BJ (cell line): ENCODE measurements at regions of chr4 and their contacts with region 1.

Region 1: DNA sequence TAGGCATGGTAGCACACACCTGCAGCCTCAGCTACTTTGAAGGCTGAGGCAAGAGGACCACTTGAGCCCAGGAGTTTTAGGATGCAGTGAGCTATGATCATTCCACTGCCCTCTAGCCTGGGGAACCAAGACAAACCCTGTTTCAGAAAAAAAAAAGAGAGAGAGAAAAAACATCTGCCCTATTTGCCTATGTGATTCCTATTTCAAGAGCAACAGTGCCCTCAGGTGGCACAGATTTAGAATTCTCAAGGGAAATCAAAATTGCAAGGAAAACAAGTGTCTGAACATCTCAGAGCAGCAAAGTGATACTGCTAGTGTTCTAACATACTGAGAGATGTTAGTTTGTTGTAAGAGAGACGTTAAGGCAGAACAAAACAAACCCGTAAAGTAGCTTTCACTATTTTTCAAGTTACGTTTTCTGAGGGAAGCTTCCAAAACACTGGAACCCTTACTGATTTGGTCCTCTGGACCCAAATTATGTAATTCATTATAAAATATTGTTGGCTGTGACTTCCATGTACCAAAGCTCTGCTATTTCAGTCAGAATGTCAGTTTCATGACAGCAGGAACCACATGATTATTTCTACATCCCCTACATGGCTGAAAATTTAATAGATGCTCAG is 7.9 kb downstream of the BDH2 start:
- DNase-seq: no peak
- H3K4me3 ChIP-seq: no peak overlapping the region
- H3K27me3 ChIP-seq: no peaks in the 10 kb centered on the region
- CTCF ChIP-seq: peak; percentile 60

Region 2: DNA sequence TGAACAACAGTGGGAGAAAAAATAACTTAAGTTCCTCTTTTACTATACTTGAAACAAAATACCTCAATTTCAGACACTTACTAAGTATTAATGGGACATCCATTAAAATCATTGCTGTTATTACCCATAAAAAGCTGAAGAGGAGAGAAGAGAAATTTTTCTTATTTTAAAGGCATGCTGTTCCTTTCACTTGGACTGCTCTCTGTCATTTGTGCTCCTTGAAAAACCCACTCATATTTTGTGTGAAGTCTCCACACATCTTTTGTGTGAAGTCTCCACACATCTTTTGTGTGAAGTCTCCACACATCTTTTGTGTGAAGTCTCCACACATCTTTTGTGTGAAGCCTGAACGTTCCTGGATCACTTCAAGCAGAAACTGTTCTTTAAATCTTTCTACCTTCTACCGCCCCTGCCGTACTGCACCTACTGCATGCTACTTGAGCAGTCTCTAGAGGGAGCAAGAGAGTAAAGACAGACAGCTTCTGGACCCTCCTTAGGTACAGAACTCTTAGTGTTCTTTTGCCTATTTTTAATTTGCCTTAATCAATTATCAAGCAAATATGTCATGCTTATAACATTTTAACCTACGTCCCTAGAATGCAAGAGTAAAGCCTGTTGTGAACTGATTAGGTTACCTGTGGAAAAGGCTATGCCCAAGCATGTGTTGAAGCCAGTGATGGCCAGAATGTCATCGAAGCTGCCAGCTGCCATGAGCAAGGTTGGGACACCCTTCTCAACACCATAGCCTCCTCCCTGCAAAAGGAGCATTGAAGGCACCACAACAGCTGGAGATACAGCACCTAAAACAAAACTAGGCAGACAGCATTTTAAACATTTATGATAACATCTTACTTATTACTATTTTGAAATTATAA is 45.1 kb before region 1 on chr4:
- CTCF ChIA-PET with region 1: interaction called, 11 read pairs
- POLR2A ChIA-PET with region 1: no interaction called
- DNase-seq: no peak
- H3K4me3 ChIP-seq: no peak overlapping the region
- H3K27me3 ChIP-seq: no peaks in the 10 kb centered on the region
- CTCF ChIP-seq: peak; percentile 79

Region 3: GRCh38 chr4:103079621-103080020 is 12.1 kb before region 1 on chr4:
- CTCF ChIA-PET with region 1: interaction called, 52 read pairs
- POLR2A ChIA-PET with region 1: no interaction called
- DNase-seq: no peak
- H3K4me3 ChIP-seq: no peak overlapping the region
- H3K27me3 ChIP-seq: no peaks in the 10 kb centered on the region
- CTCF ChIP-seq: no peak

Region 4: GRCh38 chr4:103207673-103208072 is 116.0 kb after region 1 on chr4:
- CTCF ChIA-PET with region 1: no interaction called
- POLR2A ChIA-PET with region 1: no interaction called
- DNase-seq: no peak
- H3K4me3 ChIP-seq: no peak overlapping the region
- H3K27me3 ChIP-seq: peaks cover 2% of the 10 kb centered on the region
- CTCF ChIP-seq: no peak